ENCODE measurements at regions of chr1 and their contacts with region 1.

Region 1: DNA sequence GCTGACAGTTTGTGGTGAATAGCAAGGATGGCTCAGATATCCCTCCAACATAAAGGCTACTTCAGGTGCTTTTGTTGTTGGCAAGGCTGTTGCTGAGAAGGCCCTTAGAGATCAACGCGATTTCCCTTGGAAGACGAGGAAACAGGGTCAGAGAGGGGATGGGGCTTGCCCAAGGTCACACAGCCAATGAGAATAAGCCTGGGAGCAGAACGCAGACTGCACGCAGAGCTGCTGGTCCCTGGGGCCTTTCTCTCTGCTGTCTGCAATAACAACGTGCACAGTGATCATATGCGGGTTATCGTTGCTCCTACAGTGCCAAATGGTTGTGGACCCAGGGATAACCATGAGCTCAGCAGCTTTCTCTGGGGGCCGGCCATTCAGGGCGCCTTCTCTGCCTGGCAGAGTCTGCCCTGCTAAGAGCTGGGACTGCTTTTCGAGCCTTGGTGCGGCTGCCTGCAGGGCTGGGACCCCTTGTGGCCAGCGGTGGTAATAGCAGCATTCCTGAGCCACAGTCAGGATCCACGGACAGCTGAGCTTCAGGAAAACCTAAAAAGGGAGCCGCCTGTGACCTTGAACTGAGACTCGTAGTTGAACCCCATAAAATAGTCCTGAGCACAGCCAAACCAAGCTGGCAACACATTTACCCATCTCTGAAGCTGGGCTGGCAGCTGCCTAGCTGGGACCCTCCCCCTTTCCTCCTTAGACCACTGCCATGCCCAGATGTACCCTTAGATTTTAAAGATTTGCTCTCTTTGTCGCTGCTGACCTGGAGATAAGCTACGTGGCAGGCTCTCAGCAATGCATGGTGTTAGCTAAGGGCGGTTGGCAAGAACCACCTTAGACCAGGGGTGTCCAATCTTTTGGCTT is 39.8 kb downstream of the HTR6 start:
- DNase-seq: peak; percentile 90
- ATAC-seq: peak; percentile 93
- H3K4me3 Mint-ChIP-seq: peak overlapping the region; percentile 33
- H3K27ac Mint-ChIP-seq: no peak overlapping the region
- H3K4me1 Mint-ChIP-seq: peaks cover 14% of the 10 kb centered on the region
- H3K27me3 Mint-ChIP-seq: no peaks in the 10 kb centered on the region
- CTCF ChIP-seq: peak; percentile 95

Region 2: GRCh38 chr1:19405761-19406487 is 298.6 kb before region 1 on chr1:
- CTCF ChIA-PET with region 1: interaction called, 3 read pairs
- POLR2A ChIA-PET with region 1: interaction called, 10 read pairs
- DNase-seq: no peak
- ATAC-seq: no peak
- H3K4me3 Mint-ChIP-seq: no peak overlapping the region
- H3K27ac Mint-ChIP-seq: peak overlapping the region; percentile 48
- H3K4me1 Mint-ChIP-seq: peaks cover 70% of the 10 kb centered on the region
- H3K27me3 Mint-ChIP-seq: no peaks in the 10 kb centered on the region
- CTCF ChIP-seq: no peak

Region 3: DNA sequence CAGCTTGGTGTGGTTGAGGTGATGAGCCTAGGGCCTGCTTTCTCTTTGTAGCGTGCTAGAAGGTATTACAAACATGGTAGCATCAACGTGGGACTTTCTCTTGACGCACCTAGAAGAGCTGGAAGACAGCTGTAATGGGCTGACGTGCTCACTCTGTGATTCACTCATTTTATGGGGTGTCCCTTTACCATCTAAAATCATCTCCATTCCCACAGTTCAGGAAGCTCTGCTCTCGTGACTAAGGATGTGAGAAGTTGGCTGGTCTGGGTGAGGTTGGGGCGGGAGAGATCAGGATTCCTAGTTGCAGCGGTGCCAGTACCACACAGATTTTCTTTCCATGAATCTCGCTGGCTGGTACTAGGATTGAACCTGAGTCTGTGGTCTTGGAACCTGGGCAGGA is 35.6 kb before region 1 on chr1:
- CTCF ChIA-PET with region 1: interaction called, 208 read pairs
- POLR2A ChIA-PET with region 1: no interaction called
- DNase-seq: no peak
- ATAC-seq: no peak
- H3K4me3 Mint-ChIP-seq: no peak overlapping the region
- H3K27ac Mint-ChIP-seq: no peak overlapping the region
- H3K4me1 Mint-ChIP-seq: peaks cover 4% of the 10 kb centered on the region
- H3K27me3 Mint-ChIP-seq: peaks cover 48% of the 10 kb centered on the region
- CTCF ChIP-seq: no peak

Region 4: DNA sequence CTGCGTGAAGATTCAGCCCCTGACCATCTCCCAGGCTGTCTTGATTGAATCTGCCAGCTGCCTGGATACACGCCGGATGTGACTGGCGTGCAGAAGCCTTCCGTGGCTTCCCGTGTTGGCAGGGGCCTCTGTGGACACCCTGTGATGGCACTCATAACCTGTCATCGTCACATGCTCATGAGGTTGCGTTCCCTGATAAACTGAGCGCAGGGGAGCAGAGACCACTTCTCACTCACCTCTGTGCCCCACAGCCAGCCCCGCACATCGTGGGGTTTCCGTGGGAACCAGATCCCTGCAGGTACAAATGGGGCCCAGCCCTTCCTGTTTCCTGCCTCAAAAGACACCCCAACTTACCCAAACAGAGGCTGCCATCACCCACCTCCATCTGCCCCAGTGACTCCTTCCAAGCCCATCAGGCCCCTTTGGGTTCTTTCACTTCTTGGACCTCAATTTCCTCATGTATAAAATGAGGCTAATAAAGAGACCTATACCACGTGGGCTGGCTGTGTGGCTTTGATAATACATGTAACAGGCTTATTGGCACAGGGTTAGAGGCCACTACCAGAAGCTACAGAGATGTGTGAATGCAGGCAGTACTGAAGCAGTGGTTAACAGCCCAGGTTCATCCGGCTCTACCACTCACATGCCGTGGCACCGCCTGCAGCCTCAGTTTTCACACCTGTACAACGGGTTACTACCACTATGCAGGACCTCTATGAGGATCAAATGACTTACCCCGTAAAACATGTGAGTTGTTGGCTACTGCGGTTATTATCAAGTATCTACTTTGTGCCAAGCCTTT is 16.2 kb before region 1 on chr1:
- CTCF ChIA-PET with region 1: interaction called, 38 read pairs
- POLR2A ChIA-PET with region 1: no interaction called
- DNase-seq: no peak
- ATAC-seq: no peak
- H3K4me3 Mint-ChIP-seq: no peak overlapping the region
- H3K27ac Mint-ChIP-seq: no peak overlapping the region
- H3K4me1 Mint-ChIP-seq: peaks cover 23% of the 10 kb centered on the region
- H3K27me3 Mint-ChIP-seq: no peaks in the 10 kb centered on the region
- CTCF ChIP-seq: no peak

Region 5: GRCh38 chr1:19720973-19721372 is 16.5 kb after region 1 on chr1:
- CTCF ChIA-PET with region 1: interaction called, 82 read pairs
- POLR2A ChIA-PET with region 1: interaction called, 5 read pairs
- DNase-seq: no peak
- ATAC-seq: peak; percentile 46
- H3K4me3 Mint-ChIP-seq: no peak overlapping the region
- H3K27ac Mint-ChIP-seq: peak overlapping the region; percentile 92
- H3K4me1 Mint-ChIP-seq: peaks cover 20% of the 10 kb centered on the region
- H3K27me3 Mint-ChIP-seq: no peaks in the 10 kb centered on the region
- CTCF ChIP-seq: no peak

Region 6: GRCh38 chr1:19739628-19740027 is 35.1 kb after region 1 on chr1:
- CTCF ChIA-PET with region 1: no interaction called
- POLR2A ChIA-PET with region 1: no interaction called
- DNase-seq: no peak
- ATAC-seq: no peak
- H3K4me3 Mint-ChIP-seq: no peak overlapping the region
- H3K27ac Mint-ChIP-seq: no peak overlapping the region
- H3K4me1 Mint-ChIP-seq: no peaks in the 10 kb centered on the region
- H3K27me3 Mint-ChIP-seq: no peaks in the 10 kb centered on the region
- CTCF ChIP-seq: no peak

Region 7: DNA sequence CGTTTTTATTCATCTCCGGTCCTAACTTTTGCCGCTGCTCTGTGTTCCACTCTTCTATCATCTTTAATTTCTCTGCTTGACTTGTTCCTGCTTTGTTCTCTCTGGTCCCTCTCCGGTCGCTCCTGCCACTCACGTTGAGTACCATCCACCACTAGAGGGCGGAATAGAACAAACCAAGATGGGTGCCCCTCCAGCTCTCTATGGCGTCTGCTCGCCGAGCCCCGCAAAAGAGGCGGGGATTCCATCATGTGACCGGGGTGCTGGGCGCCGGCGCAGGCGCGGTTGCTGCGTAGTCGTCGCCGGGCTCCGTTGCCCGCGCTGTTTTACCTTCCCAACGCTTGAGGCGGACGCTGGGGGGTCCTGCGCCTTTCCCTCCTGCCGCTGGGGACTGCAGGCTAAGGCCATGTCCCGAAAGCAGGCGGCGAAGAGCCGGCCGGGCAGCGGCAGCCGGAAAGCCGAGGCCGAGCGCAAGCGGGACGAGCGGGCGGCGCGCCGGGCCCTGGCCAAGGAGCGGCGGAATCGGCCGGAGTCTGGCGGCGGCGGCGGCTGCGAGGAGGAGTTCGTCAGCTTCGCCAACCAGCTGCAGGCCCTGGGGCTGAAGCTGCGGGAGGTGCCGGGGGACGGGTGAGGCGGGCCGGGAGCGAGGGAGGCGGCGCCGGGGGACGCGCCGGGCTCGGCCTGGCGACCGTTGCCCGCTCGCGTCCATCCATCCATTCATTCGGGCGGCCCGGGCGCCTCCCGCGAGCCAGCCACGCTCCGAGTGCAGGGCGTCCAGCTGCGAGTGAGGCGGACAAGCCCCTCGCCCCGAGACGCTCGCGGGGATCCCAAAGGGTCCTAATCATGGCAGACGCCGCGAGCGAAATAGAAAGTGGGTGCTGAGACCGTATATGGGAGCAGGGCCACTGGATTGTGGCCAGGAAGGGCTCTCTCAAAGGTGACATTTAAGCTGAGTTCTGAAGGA is 177.9 kb after region 1 on chr1 and contains the start of gene OTUD3:
- CTCF ChIA-PET with region 1: interaction called, 23 read pairs
- POLR2A ChIA-PET with region 1: no interaction called
- DNase-seq: peak; percentile 94
- ATAC-seq: peak; percentile 96
- H3K4me3 Mint-ChIP-seq: peak within 1 kb of the TSS; percentile 82
- H3K27ac Mint-ChIP-seq: no peak within 1 kb of the TSS
- H3K4me1 Mint-ChIP-seq: peaks cover 22% of the 10 kb centered on the region
- H3K27me3 Mint-ChIP-seq: no peaks in the 10 kb centered on the region; the same call in 1 of the 2 replicates
- CTCF ChIP-seq: peak; percentile 77
- total RNA-seq, gene OTUD3: 16.1 to 19.4 TPM (median 16.4 TPM) in 3 replicates

Measured in WTC11 (cell line).